ENCODE measurements at regions of chr10 and their contacts with region 1.

Region 1: GRCh38 chr10:109894516-109894915 is 28.8 kb downstream of the XPNPEP1 start:
- DNase-seq: peak; percentile 73 to 81
- ATAC-seq: peak; percentile 75 to 86 (median 82)
- H3K4me3 ChIP-seq: no peak overlapping the region
- H3K27ac ChIP-seq: peak overlapping the region; percentile 61 to 86 (median 72)
- H3K4me1 ChIP-seq: peaks cover 21 to 99% (median 82%) of the 10 kb centered on the region in 9 donors
- H3K27me3 ChIP-seq: no peaks in the 10 kb centered on the region
- CTCF ChIP-seq: no peak

Region 2: GRCh38 chr10:109929501-109930219 is 35.1 kb after region 1 on chr10:
- intact Hi-C with region 1: loop called in 2 of 10 experiments (anchors 5 kb)
- DNase-seq: no peak
- ATAC-seq: no peak
- H3K4me3 ChIP-seq: no peak overlapping the region
- H3K27ac ChIP-seq: no peak overlapping the region
- H3K4me1 ChIP-seq: peaks cover 5 to 23% (median 11%) of the 10 kb centered on the region in 9 donors
- H3K27me3 ChIP-seq: no peaks in the 10 kb centered on the region
- CTCF ChIP-seq: no peak

Region 3: GRCh38 chr10:109978481-109978880 is 84.0 kb after region 1 on chr10:
- intact Hi-C with region 1: loop called in 5 of 10 experiments (anchors 5 to 10 kb)
- DNase-seq: peak in 1 of 2 donors; percentile 54
- ATAC-seq: peak in 6 of 8 donors; percentile 31 to 59 (median 46)
- H3K4me3 ChIP-seq: peak overlapping the region in 1 of 10 donors; percentile 0
- H3K27ac ChIP-seq: peak overlapping the region in 7 of 10 donors; percentile 0 to 70 (median 11)
- H3K4me1 ChIP-seq: peaks cover 0 to 48% (median 9%) of the 10 kb centered on the region in 9 donors
- H3K27me3 ChIP-seq: no peaks in the 10 kb centered on the region
- CTCF ChIP-seq: peak; percentile 73 to 88 (median 78)

Region 4: GRCh38 chr10:110137142-110137545 is 242.6 kb after region 1 on chr10:
- intact Hi-C with region 1: loop called in 3 of 10 experiments (anchors 5 to 10 kb)
- DNase-seq: peak in 1 of 2 donors; percentile 32
- ATAC-seq: peak; percentile 64 to 86 (median 80)
- H3K4me3 ChIP-seq: peak overlapping the region in 1 of 10 donors; percentile 21
- H3K27ac ChIP-seq: peak overlapping the region in 7 of 10 donors; percentile 10 to 83 (median 49)
- H3K4me1 ChIP-seq: peaks cover 0 to 41% (median 30%) of the 10 kb centered on the region in 9 donors
- H3K27me3 ChIP-seq: no peaks in the 10 kb centered on the region
- CTCF ChIP-seq: peak; percentile 67 to 86 (median 77)

Measured in heart right ventricle (tissue), 16 donors.